Mammary epithelial cell (primary cell): ENCODE measurements at regions of chr15 and their contacts with region 1.

Region 1: GRCh38 chr15:74906446-74907162 is at the start of gene FAM219B:
- DNase-seq: peak; percentile 76
- H3K4me3 ChIP-seq: peak within 1 kb of the TSS; percentile 81 to 97 (median 84)
- H3K27ac ChIP-seq: peak within 1 kb of the TSS; percentile 74
- H3K4me1 ChIP-seq: peaks cover 11% of the 10 kb centered on the region
- H3K27me3 ChIP-seq: no peaks in the 10 kb centered on the region
- CTCF ChIP-seq: peak in 1 of 2 donors; percentile 0
- total RNA-seq, gene FAM219B: 64.2 to 89.0 TPM

Region 2: DNA sequence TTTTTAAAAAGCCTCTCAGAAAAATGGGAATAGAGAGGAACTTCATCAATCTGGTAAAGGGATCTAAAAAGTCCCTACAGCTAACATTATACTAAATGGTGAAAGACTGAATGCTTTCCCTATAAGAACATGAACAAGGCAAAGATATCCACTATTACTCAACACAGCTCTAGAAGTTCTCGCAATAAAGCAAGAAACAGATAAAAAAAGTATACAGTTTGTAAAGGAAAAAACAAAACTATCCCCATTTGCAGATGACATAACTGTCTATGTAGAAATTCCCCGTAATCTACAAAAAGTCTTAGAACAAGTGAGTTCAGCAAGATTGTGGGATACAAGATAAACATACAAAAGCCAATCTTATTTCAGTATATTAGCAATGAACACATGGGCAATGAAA is 226.1 kb before region 1 on chr15:
- CTCF ChIA-PET with region 1: no interaction called
- dilution Hi-C with region 1: no loop called
- in situ Hi-C with region 1: no loop called
- intact Hi-C with region 1: no loop called
- DNase-seq: no peak
- H3K4me3 ChIP-seq: no peak overlapping the region
- H3K27ac ChIP-seq: no peak overlapping the region
- H3K4me1 ChIP-seq: no peaks in the 10 kb centered on the region
- H3K27me3 ChIP-seq: no peaks in the 10 kb centered on the region
- CTCF ChIP-seq: no peak

Region 3: GRCh38 chr15:74842581-74843444 is 63.8 kb before region 1 on chr15 and contains the start of gene ULK3:
- CTCF ChIA-PET with region 1: interaction called, 3 read pairs
- dilution Hi-C with region 1: no loop called
- in situ Hi-C with region 1: no loop called
- intact Hi-C with region 1: loop called (anchors 2 kb)
- DNase-seq: peak; percentile 82
- H3K4me3 ChIP-seq: peak within 1 kb of the TSS; percentile 78 to 98 (median 89)
- H3K27ac ChIP-seq: peak within 1 kb of the TSS; percentile 49
- H3K4me1 ChIP-seq: peaks cover 8% of the 10 kb centered on the region
- H3K27me3 ChIP-seq: no peaks in the 10 kb centered on the region
- CTCF ChIP-seq: peak; percentile 39 to 56
- total RNA-seq, gene ULK3: 20.0 to 26.3 TPM

Region 4: DNA sequence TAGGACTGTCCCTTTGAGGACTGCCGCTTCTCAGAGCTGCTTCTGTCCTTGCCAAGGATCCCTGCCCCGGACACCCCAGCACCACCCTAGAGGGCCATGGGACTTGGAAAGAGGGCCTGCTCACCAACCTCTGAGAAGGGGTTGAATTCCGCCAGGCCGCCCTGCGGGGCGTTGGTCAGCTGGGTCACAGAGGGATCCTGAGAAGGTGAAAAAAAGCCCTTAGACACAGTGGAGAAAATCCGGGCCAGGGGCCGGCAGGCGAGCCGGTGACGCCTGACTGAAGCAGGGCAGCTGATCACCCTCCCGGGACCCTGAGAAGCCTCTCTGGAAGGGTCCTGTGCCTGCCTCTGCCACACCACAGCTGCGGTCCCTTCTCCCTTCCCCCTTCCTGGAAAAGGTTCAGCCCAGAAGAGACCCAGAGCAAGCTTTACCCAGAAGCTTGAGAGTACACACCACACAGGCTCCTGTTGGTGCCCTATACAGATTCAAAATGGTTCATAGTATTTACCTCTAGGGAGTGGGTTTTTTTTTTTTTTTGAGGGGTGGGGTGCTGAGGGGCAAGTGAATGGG is 52.1 kb before region 1 on chr15:
- CTCF ChIA-PET with region 1: no interaction called
- dilution Hi-C with region 1: loop called (anchors 5 kb)
- in situ Hi-C with region 1: no loop called
- intact Hi-C with region 1: no loop called
- DNase-seq: no peak
- H3K4me3 ChIP-seq: no peak overlapping the region
- H3K27ac ChIP-seq: no peak overlapping the region
- H3K4me1 ChIP-seq: no peaks in the 10 kb centered on the region
- H3K27me3 ChIP-seq: no peaks in the 10 kb centered on the region
- CTCF ChIP-seq: no peak

Region 5: DNA sequence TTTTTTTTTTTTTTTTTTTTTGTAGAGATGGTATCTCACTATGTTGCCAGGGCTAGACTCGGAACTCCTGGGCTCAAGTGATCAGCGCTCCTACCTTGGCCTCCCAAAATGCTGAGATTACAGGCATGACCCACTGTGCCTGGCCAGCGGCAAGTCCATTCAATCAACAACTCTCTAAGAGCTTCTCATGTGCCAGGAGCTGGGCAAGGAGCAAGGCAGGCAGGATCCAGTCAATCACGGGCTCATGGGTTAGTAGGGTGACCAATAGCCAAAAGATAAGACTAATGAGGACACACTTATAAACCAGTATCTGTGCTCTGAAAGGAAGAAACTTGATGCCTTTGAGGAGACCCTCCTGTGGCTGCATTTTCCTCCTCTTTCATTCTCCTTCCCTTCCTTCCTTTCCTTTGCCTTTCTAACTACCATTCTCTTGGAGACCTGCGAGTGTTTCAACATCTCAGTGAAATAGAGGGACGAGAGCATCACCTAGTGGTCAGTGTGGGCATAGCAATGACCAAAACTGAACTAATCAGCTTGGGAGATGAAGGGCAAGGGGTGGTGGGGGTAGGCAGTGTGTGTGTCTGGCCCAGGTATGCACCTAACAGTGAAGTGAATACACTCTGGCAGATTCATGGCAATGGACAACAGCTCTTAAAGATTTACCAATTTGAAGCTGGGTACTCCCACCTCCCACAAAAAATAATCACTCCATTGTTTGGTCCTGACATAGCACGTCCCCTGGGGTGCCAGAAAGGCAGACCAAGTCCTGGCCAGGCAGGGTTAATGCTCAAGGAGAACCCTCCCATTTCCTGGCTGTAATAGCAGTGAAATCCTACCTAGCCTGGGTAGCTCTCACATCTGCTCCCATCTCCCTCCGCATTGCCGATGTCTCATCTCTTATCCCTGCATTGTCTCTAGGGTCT is 43.7 kb after region 1 on chr15:
- CTCF ChIA-PET with region 1: interaction called, 3 read pairs
- dilution Hi-C with region 1: no loop called
- in situ Hi-C with region 1: no loop called
- intact Hi-C with region 1: loop called (anchors 1 kb)
- DNase-seq: peak; percentile 59
- H3K4me3 ChIP-seq: no peak overlapping the region
- H3K27ac ChIP-seq: no peak overlapping the region
- H3K4me1 ChIP-seq: no peaks in the 10 kb centered on the region
- H3K27me3 ChIP-seq: no peaks in the 10 kb centered on the region
- CTCF ChIP-seq: peak; percentile 99 to 100

Region 6: DNA sequence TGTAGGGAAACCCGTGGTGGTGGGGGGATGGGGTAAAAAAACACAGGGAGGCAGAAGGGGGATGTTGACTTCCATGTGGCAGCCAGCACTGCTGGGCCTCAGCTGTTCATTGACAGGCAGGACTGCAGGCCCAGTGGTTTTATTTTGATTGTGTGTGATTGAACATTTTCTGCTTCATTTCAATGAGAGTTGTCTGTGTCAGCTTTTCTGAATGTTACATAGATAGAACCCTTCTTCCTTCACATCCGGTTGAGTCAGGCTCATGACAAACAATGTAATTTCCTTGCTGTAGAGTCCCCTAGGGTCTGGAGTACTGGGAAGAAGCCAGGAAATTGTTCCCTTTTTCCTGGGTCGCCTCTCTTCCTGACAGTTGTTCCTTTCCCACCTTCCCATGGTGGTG is 58.2 kb after region 1 on chr15:
- CTCF ChIA-PET with region 1: interaction called, 20 read pairs
- dilution Hi-C with region 1: no loop called
- in situ Hi-C with region 1: no loop called
- intact Hi-C with region 1: no loop called
- DNase-seq: no peak
- H3K4me3 ChIP-seq: no peak overlapping the region
- H3K27ac ChIP-seq: no peak overlapping the region
- H3K4me1 ChIP-seq: peaks cover 6% of the 10 kb centered on the region
- H3K27me3 ChIP-seq: no peaks in the 10 kb centered on the region
- CTCF ChIP-seq: no peak

Region 7: GRCh38 chr15:74978503-74978902 is 71.9 kb after region 1 on chr15:
- CTCF ChIA-PET with region 1: no interaction called
- dilution Hi-C with region 1: loop called (anchors 5 kb)
- in situ Hi-C with region 1: no loop called
- intact Hi-C with region 1: no loop called
- DNase-seq: no peak
- H3K4me3 ChIP-seq: no peak overlapping the region
- H3K27ac ChIP-seq: no peak overlapping the region
- H3K4me1 ChIP-seq: no peaks in the 10 kb centered on the region
- H3K27me3 ChIP-seq: no peaks in the 10 kb centered on the region
- CTCF ChIP-seq: no peak

Region 8: DNA sequence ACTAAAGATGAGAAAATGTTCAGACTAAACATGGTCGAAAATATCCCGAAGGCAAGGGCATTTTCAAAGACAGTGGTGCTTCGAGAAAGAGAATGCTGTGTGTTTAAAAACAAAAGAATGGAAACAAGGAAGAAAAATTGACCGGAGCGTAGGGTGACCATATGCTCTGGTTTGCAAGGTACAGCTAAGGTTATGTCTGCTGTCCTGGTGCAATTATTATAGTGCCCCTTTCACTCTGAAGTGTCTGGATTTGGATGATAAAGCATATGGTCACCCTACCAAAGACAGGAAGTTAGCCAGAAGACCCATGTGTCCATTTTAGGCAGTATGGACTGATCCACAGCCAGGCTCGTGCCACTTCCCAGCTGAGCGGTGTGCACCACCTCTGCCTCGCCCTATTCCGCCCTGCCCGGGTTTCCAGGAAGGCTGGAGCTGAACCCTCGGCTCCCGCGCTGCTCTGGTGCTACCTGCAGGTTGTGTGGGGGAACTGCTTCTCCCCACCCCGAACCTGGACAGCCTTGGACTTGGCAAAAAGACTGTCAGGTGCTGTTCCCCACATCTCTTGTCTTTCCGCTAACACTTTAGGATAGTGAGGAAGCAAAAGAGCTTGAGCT is 401.3 kb after region 1 on chr15:
- CTCF ChIA-PET with region 1: interaction called, 11 read pairs
- dilution Hi-C with region 1: no loop called
- in situ Hi-C with region 1: no loop called
- intact Hi-C with region 1: no loop called
- DNase-seq: peak; percentile 57
- H3K4me3 ChIP-seq: no peak overlapping the region
- H3K27ac ChIP-seq: no peak overlapping the region
- H3K4me1 ChIP-seq: peaks cover 5% of the 10 kb centered on the region
- H3K27me3 ChIP-seq: no peaks in the 10 kb centered on the region
- CTCF ChIP-seq: peak; percentile 75 to 83